ENCODE measurements at regions of chr11 and their contacts with region 1.

Region 1: DNA sequence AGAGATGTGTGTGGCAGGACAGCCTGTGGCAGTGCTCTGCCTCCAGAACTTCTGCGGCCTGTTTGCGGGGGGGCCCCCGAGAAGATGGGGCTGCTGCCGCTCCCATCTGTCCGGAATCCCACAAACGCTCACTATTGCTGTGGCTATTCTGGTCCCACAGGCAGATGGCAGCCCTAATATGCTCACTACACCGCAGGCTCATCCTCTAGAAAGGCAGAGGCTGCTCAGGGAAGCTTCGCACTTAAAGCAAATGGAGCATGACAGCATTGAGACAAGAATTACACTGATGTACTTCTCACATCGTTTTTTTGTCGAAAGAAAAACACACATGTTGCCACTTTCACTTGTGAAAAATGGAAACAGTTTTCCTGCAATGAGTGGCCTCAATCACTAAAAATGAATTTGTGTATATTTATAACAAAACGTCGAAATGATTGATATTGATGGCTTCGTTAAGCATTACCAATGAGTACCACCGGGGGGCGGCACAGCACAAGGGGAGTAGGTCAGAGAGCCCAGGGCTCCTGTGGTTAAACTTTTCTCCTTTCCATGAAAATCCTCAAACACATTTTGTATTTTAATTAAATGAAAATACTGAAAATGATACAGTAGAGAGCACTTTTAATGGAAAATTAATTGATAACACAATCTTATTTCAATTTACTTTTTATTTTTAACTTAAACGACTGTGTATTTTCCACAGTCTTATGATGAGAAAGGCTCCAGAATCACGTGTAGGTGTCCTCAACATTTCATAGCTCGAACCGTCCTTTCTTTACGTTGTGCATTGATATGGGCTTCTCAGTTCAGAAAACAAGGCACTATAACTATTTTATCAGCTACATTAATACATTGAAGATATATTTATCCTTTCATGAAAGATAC is 69.1 kb downstream of the CTTN start:
- DNase-seq: peak; percentile 49 to 58
- ATAC-seq: peak in 3 of 8 donors; percentile 50 to 67 (median 52)
- H3K4me3 ChIP-seq: no peak overlapping the region
- H3K27ac ChIP-seq: no peak overlapping the region
- H3K4me1 ChIP-seq: peaks cover 0 to 12% (median 0%) of the 10 kb centered on the region in 9 donors
- H3K27me3 ChIP-seq: peaks cover 0 to 6% (median 2%) of the 10 kb centered on the region in 7 donors
- CTCF ChIP-seq: peak; percentile 82 to 98 (median 91)

Region 2: GRCh38 chr11:70481625-70482528 is 14.4 kb after region 1 on chr11:
- intact Hi-C with region 1: loop called in 1 of 10 experiments (anchors 1 kb)
- DNase-seq: peak; percentile 42 to 65
- ATAC-seq: peak; percentile 70 to 95 (median 86)
- H3K4me3 ChIP-seq: no peak overlapping the region
- H3K27ac ChIP-seq: peak overlapping the region; percentile 21 to 95 (median 85)
- H3K4me1 ChIP-seq: peaks cover 0 to 31% (median 7%) of the 10 kb centered on the region in 9 donors
- H3K27me3 ChIP-seq: no peaks in the 10 kb centered on the region
- CTCF ChIP-seq: no peak

Region 3: DNA sequence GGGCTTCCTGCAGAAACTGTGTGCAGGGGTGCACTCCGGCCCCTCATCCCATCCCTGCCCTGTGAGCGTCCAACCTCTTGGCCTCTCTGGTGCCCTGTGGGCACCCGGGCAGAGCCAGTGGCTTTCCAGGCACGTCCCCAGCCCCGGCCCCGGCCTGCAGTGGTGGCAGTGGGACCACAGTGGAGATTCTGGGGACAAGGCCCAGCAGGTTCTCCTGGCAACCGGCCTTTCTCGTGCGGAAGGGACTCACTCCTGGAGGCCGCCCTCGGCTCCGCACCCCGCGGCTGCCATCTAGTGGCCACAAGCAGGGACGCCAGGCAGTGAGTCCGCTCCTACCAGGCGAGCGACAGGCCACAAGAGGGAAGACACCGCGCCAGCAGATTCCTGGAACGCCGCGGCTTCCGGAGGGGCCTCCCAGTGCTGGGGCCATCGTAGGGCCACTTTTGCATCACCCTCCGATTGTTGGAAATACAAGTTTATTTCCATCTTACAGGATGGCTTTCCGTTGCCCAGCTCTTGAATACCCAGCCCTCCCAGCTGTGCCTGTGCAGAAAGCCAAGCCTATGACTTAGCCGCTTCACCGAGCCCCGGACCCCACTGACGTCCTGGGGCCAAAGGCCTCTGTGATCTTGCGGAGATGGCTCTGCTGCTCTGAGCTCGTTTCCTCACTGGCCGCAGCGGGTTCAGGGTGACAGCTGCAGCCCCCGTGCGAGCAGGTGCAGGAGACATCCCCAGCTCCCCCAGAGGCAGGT is 288.1 kb after region 1 on chr11:
- intact Hi-C with region 1: loop called in 9 of 10 experiments (anchors 1 to 5 kb)
- DNase-seq: peak; percentile 73 to 76
- ATAC-seq: peak; percentile 95 to 98 (median 96)
- H3K4me3 ChIP-seq: no peak overlapping the region
- H3K27ac ChIP-seq: no peak overlapping the region
- H3K4me1 ChIP-seq: peaks cover 0 to 8% (median 5%) of the 10 kb centered on the region in 9 donors
- H3K27me3 ChIP-seq: peaks cover 0 to 24% (median 12%) of the 10 kb centered on the region in 7 donors
- CTCF ChIP-seq: peak; percentile 92 to 99 (median 97)

Measured in heart right ventricle (tissue), 16 donors.